GM12878 (cell line): ENCODE measurements at regions of chr6 and their contacts with region 1.

Region 1: DNA sequence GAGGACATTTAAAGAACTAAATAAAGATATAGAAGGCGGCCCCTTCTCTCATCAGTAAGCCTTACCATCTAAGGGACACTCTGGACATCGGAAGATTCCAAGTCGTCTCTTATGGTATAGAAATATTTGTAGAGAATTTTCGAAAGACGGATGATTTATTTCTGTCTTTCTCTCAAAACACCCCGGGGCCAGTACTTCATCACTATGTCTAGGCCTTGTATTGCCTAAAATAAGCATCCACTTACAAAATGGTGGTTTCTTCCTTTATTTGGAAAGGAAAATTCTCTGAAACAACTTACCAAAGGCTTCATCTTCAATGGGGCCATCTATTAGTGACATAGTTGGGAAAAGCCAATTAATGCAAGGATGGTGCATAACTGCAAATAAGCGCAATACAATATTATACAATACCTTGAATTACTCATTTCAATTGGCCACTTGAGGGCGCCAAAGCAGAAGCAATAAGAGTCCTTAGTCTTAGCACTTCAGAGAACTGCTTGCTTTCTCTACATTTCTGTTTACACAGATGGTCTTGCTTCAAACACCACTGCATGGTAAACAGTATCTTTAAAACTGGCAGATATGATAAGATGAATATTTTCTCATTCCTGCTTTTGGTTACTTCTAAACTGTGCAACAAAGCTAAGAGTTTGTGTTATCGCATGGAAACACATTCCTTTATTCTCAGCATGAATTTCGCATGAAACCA is 113.2 kb downstream of the VIP start:
- DNase-seq: peak; percentile 8
- ATAC-seq: peak; percentile 96
- H3K4me3 ChIP-seq: no peak overlapping the region
- H3K27ac ChIP-seq: no peak overlapping the region
- H3K4me1 ChIP-seq: no peaks in the 10 kb centered on the region
- H3K27me3 ChIP-seq: no peaks in the 10 kb centered on the region
- CTCF ChIP-seq: peak; percentile 54 to 76 (median 60); a peak in 5 of 6 replicates
- EP300 ChIP-seq: no peak
- POLR2A ChIP-seq: no peak
- RAD21 ChIP-seq: peak; percentile 83

Region 2: DNA sequence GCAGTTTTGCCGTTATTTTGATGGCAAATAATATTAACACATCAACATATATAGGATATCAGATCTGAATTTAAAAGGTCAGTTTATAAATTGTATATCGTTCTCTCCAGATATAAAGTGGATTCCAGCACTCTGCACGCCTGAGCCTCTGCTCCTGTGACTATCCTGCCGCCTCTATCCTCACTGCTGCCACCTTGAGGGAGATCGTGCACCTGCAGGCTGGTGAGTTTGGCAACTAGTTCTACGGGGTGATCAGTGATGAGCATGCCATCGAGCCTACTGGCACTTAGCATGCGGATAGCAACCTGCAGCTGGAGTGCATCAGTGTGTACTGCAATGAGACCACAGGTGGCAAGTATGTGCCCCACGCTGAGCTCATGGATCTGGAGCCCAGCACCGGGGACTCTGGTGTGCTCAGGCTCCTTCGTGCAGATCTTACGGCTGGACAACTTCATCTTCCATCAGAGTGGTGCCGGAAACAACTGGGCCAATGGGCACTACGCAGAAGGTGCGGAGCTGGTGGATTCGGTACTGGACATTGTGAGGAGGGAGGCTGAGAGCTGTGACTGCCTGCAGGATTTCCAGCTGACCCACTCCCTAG is 34.1 kb after region 1 on chr6:
- CTCF ChIA-PET with region 1: interaction called, 25 read pairs
- POLR2A ChIA-PET with region 1: no interaction called
- RAD21 ChIA-PET with region 1: no interaction called
- SMC1A ChIA-PET with region 1: no interaction called
- in situ Hi-C with region 1: no loop called
- intact Hi-C with region 1: loop called (anchors 2 kb)
- DNase-seq: peak; percentile 4
- ATAC-seq: peak; percentile 99
- H3K4me3 ChIP-seq: no peak overlapping the region
- H3K27ac ChIP-seq: no peak overlapping the region
- H3K4me1 ChIP-seq: no peaks in the 10 kb centered on the region
- H3K27me3 ChIP-seq: no peaks in the 10 kb centered on the region
- CTCF ChIP-seq: peak; percentile 85 to 96 (median 91)
- EP300 ChIP-seq: no peak
- POLR2A ChIP-seq: no peak
- RAD21 ChIP-seq: peak; percentile 61

Region 3: GRCh38 chr6:152948150-152948768 is 84.5 kb after region 1 on chr6:
- CTCF ChIA-PET with region 1: interaction called, 38 read pairs
- POLR2A ChIA-PET with region 1: no interaction called
- RAD21 ChIA-PET with region 1: interaction called, 6 read pairs
- SMC1A ChIA-PET with region 1: interaction called, 10 read pairs
- in situ Hi-C with region 1: loop called (anchors 5 kb)
- intact Hi-C with region 1: loop called (anchors 1 kb)
- DNase-seq: no peak
- ATAC-seq: peak; percentile 91
- H3K4me3 ChIP-seq: no peak overlapping the region
- H3K27ac ChIP-seq: no peak overlapping the region
- H3K4me1 ChIP-seq: no peaks in the 10 kb centered on the region
- H3K27me3 ChIP-seq: no peaks in the 10 kb centered on the region
- CTCF ChIP-seq: peak; percentile 54 to 62 (median 60)
- EP300 ChIP-seq: no peak
- POLR2A ChIP-seq: no peak
- RAD21 ChIP-seq: peak; percentile 79

Region 4: DNA sequence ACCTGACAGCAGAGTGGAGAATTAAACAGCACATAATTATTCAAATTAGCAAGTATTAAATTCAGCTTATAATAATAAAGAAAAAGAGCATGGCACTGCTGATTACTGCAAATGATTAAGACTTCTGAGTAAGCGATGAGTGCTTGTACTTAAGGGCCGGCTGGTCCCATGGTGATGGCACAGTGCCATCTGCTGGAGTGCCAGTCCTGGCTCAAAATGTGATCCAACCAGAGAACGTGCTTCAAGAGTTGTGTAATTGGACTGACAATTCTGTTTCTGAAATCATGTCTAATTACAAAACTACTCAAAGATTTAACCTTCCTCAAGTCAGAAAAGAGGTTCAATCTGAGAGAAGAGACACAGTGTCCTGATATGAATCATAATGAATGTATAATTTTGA is 448.9 kb after region 1 on chr6:
- CTCF ChIA-PET with region 1: interaction called, 4 read pairs
- POLR2A ChIA-PET with region 1: no interaction called
- RAD21 ChIA-PET with region 1: no interaction called
- SMC1A ChIA-PET with region 1: no interaction called
- in situ Hi-C with region 1: no loop called
- intact Hi-C with region 1: loop called (anchors 10 kb)
- DNase-seq: no peak
- ATAC-seq: peak; percentile 85
- H3K4me3 ChIP-seq: no peak overlapping the region
- H3K27ac ChIP-seq: no peak overlapping the region
- H3K4me1 ChIP-seq: no peaks in the 10 kb centered on the region
- H3K27me3 ChIP-seq: no peaks in the 10 kb centered on the region
- CTCF ChIP-seq: peak; percentile 55 to 74 (median 65)
- EP300 ChIP-seq: no peak
- POLR2A ChIP-seq: no peak
- RAD21 ChIP-seq: peak; percentile 59

Region 5: DNA sequence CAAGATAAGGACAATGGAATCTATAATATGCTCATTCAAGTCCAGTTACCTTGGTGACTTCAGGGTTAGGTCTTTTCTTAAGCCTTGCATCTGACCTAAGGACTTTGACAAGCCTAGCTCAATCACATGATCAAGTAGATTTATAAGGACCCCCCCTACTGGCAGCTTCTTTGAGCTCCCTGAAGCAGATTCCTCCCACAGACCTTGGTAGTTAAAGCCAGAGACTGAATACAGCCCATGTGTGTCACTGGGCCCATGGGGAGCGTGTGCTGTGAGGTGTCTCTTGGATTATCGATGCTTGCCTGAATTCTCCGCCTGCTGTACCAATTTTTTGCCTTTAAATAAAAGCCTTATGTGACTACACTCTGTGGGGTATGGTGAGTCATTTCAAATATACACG is 640.0 kb after region 1 on chr6:
- CTCF ChIA-PET with region 1: no interaction called
- POLR2A ChIA-PET with region 1: no interaction called
- RAD21 ChIA-PET with region 1: no interaction called
- SMC1A ChIA-PET with region 1: no interaction called
- in situ Hi-C with region 1: no loop called
- intact Hi-C with region 1: loop called (anchors 5 kb)
- DNase-seq: no peak
- ATAC-seq: peak; percentile 54
- H3K4me3 ChIP-seq: no peak overlapping the region
- H3K27ac ChIP-seq: no peak overlapping the region
- H3K4me1 ChIP-seq: no peaks in the 10 kb centered on the region
- H3K27me3 ChIP-seq: no peaks in the 10 kb centered on the region
- CTCF ChIP-seq: no peak
- EP300 ChIP-seq: no peak
- POLR2A ChIP-seq: no peak
- RAD21 ChIP-seq: no peak